ENCODE measurements at regions of chr1 and their contacts with region 1.

Region 1: DNA sequence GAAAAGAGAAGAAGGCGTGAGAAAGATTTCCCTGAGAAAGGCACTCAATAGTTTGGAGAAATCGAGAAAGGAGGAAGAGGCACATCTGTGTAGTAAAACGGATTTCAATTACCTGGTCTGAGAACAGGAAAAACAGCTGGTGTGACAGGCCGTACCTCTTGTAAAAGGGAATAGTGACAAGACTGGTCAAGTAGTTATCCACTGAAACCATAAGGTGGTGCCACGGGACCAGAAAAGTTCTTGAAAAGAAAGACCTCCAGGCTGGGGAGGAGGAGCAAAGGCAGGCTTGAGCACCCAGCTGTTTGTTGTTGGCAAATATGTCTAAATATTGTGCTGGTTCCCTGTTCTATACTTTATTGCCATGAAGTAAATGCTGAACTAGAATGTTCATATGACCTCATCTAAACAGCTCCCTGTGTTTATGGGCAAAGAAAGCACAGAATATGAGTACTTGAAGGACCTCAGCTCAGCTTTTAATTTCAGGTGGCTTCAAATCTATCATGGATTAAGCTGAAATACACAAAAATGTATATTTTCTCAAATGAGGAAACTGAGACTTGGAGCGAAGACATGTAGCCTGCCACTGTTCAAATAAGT is 4.0 kb downstream of the HAO2 start:
- DNase-seq: peak; percentile 75
- H3K4me3 ChIP-seq: no peak overlapping the region
- H3K27ac ChIP-seq: no peak overlapping the region
- H3K4me1 ChIP-seq: peaks cover 7% of the 10 kb centered on the region
- H3K27me3 ChIP-seq: no peaks in the 10 kb centered on the region
- CTCF ChIP-seq: peak in 3 of 4 experiments; percentile 44 to 63 (median 49)
- POLR2A ChIP-seq: no peak

Region 2: DNA sequence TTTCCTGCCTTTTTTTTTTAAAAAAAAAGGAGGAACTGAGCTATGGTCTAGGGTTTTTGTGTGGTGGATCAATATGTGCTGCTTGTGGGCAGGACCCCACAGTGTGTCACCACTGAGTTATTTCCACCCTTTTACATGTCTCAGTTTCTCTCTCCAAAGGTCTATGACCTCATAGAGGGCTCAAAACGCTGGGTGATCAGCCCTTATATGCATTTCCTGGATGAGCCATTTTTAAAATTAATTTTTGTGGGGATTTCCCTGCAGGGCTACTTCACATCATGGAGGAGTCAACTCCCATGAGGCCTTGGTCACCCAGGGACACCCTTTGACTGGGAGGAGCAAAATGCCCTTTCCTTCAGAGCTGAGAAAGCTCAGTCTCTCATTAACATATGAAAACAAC is 24.7 kb before region 1 on chr1:
- intact Hi-C with region 1: no loop called
- DNase-seq: no peak
- H3K4me3 ChIP-seq: no peak overlapping the region
- H3K27ac ChIP-seq: no peak overlapping the region
- H3K4me1 ChIP-seq: no peaks in the 10 kb centered on the region
- H3K27me3 ChIP-seq: no peaks in the 10 kb centered on the region
- CTCF ChIP-seq: no peak
- POLR2A ChIP-seq: no peak

Region 3: DNA sequence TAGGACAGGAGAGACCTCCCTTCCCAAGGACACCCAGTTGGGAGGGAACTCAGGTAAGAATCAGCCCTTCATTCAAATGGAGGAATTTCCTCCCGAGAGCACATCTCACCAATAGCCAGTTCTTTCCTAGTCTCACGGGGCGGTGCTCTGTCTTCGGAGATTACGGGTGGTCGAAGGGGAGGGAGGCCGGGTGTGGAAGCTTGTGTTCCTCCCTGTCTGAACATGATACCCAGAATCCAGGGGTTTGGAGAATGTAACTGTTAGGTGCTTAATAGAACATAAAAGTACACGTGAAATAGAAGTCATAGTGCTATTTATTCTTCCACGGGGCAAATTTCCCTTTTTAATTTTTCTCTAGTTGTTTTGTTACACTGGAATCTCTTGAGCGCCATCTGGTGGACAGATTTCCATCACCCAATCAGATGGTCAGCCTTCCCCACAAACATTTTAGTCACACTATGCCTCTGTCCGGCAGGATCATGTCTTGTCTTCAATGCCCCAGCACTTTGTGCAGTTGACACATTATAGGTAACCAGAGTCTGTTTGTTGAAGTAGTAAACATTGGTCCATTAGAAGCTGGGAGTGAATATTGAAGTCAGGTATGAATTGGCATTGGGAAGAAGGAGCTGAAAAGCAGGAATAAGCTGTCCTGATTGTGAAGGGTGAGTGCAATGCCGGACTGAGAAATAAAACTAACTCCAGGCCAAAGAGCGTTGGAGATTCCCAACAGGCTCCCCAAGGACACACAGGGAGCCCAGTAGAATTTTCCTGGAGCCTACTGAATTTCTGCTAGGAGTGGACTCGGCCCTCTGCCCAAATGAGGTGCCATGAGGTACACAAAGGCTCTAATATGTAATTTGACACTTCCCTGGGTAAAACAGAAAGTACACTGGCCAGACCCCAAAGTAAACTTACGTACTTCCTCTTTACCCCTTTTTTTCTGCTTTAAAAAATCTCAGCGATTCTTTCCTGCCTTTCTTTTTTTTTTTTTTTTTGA is 303.1 kb after region 1 on chr1:
- intact Hi-C with region 1: loop called (anchors 10 kb)
- DNase-seq: peak; percentile 87
- H3K4me3 ChIP-seq: peak overlapping the region; percentile 15 to 21
- H3K27ac ChIP-seq: peak overlapping the region; percentile 62 to 64
- H3K4me1 ChIP-seq: no peaks in the 10 kb centered on the region
- H3K27me3 ChIP-seq: no peaks in the 10 kb centered on the region
- CTCF ChIP-seq: peak; percentile 82 to 95 (median 84)
- POLR2A ChIP-seq: no peak